ENCODE measurements at regions of chr5 and their contacts with region 1.

Region 1: DNA sequence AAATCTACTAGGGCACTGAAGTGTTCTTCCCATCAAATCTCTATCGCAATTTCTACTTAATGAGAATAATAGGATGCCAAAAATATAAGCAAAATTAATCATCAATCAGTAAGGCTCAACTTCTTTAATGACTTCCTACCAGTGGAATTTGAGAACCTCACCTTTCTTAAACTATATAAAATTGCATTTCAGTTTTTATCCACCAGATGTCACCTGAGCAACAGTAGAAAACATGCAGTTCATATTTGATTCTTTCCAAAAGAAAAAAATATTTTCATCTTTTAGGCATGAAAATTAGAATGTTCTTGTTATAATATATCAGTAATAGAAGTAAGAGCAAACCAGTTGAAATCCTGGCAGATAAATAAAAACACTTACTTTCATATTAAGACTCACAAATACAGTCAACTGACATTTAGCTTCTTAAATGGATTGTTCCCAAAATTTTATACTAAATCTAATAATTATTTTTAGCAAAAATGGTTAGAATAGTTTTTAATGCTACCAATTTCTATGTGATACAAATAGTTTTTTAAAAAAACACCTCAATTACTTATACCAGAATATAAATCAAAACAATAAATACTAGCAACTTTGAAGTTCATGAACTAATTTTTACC is 13.4 kb upstream of the CCDC112 start:
- DNase-seq: no peak
- ATAC-seq: peak; percentile 75
- H3K4me3 ChIP-seq: no peak overlapping the region
- H3K27ac ChIP-seq: no peak overlapping the region
- H3K4me1 ChIP-seq: no peaks in the 10 kb centered on the region
- H3K27me3 ChIP-seq: no peaks in the 10 kb centered on the region
- CTCF ChIP-seq: peak; percentile 25 to 50 (median 47); a peak in 4 of 6 replicates
- EP300 ChIP-seq: no peak
- POLR2A ChIP-seq: no peak
- RAD21 ChIP-seq: peak; percentile 77

Region 2: GRCh38 chr5:115098041-115098702 is 211.7 kb before region 1 on chr5:
- CTCF ChIA-PET with region 1: interaction called, 11 read pairs
- POLR2A ChIA-PET with region 1: no interaction called
- RAD21 ChIA-PET with region 1: interaction called, 24 read pairs
- SMC1A ChIA-PET with region 1: interaction called, 4 read pairs
- in situ Hi-C with region 1: no loop called
- intact Hi-C with region 1: loop called (anchors 5 kb)
- DNase-seq: peak; percentile 7
- ATAC-seq: peak; percentile 97
- H3K4me3 ChIP-seq: no peak overlapping the region
- H3K27ac ChIP-seq: no peak overlapping the region
- H3K4me1 ChIP-seq: no peaks in the 10 kb centered on the region
- H3K27me3 ChIP-seq: no peaks in the 10 kb centered on the region
- CTCF ChIP-seq: peak; percentile 77 to 85 (median 78)
- EP300 ChIP-seq: no peak
- POLR2A ChIP-seq: no peak
- RAD21 ChIP-seq: peak; percentile 81

Region 3: DNA sequence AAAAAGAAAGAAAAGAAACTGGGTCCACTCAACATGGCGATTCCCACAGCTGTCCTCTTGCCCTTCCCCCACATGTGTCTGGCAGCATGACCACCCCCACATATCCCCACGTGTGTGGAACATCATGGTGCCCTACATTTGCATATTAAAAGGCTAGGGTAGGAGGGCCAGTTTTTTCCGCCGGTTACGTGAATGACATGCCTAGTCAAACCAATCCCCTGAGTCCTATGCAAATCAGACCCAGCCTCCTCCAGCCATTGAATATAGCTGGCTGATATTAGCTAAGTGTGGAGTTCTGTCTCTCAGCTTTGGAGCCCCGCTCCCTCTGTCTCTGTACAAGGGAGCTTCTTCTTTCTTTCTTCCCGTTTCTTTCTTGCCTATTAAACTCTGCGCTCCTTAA is 19.6 kb after region 1 on chr5:
- CTCF ChIA-PET with region 1: interaction called, 30 read pairs
- POLR2A ChIA-PET with region 1: no interaction called
- RAD21 ChIA-PET with region 1: interaction called, 10 read pairs
- SMC1A ChIA-PET with region 1: interaction called, 7 read pairs
- in situ Hi-C with region 1: no loop called
- intact Hi-C with region 1: no loop called
- DNase-seq: no peak
- ATAC-seq: no peak
- H3K4me3 ChIP-seq: no peak overlapping the region
- H3K27ac ChIP-seq: no peak overlapping the region
- H3K4me1 ChIP-seq: no peaks in the 10 kb centered on the region
- H3K27me3 ChIP-seq: no peaks in the 10 kb centered on the region
- CTCF ChIP-seq: no peak
- EP300 ChIP-seq: no peak
- POLR2A ChIP-seq: no peak
- RAD21 ChIP-seq: no peak

Region 4: DNA sequence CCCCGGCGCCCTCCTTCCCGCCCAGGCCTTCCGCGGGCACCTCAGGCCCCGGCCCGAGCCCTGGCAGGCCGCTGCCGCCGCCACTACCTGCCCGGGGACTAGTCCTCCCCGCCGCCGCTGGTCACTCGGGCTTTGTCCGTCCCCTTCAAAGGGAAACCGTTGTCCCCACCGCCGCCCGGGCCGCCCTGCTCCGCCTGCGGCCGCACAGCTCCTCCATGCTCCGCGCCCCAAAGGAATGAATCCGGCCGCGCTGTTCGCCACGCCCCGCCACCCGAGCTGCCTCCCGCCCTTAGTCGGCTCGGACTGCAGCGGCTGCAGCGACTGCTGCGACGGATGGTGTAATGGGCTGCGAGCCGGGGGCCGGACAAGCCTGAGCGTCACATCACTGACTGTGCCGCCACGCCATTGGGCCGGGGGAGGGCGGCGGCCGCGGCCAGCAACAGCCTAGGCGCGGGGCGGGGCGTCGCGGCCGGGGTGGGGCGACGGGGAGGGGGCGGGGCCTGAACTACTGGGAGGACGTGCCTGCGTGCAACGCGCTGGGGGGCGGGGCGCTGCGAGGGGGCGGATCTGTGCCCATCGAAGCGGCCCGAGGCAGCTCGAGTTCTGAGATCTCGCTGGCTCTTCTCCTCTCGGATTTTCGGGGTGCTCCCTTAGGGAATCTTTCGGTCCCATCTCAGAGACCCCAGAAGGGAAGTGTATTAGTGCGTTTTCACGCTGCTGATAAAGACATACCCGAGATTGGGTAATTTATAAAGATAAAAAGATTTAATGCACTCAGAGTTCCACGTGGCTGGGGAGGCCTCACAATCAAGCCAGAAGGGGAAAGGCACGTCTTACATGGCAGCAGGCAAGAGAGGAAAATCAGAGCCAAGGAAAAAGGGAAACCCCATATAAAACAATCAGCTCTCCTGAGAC is 234.8 kb after region 1 on chr5 and contains the start of gene FEM1C:
- CTCF ChIA-PET with region 1: interaction called, 33 read pairs
- POLR2A ChIA-PET with region 1: interaction called, 3 read pairs
- RAD21 ChIA-PET with region 1: interaction called, 14 read pairs
- SMC1A ChIA-PET with region 1: interaction called, 54 read pairs
- in situ Hi-C with region 1: no loop called
- intact Hi-C with region 1: no loop called
- DNase-seq: peak; percentile 83
- ATAC-seq: peak; percentile 94
- H3K4me3 ChIP-seq: peak within 1 kb of the TSS; percentile 81
- H3K27ac ChIP-seq: peak within 1 kb of the TSS; percentile 88
- H3K4me1 ChIP-seq: peaks cover 4% of the 10 kb centered on the region
- H3K27me3 ChIP-seq: no peaks in the 10 kb centered on the region
- CTCF ChIP-seq: no peak
- EP300 ChIP-seq: no peak
- POLR2A ChIP-seq: peak; percentile 100
- RAD21 ChIP-seq: no peak
- polyA plus RNA-seq, gene FEM1C: 1.9 to 7.1 TPM

Region 5: DNA sequence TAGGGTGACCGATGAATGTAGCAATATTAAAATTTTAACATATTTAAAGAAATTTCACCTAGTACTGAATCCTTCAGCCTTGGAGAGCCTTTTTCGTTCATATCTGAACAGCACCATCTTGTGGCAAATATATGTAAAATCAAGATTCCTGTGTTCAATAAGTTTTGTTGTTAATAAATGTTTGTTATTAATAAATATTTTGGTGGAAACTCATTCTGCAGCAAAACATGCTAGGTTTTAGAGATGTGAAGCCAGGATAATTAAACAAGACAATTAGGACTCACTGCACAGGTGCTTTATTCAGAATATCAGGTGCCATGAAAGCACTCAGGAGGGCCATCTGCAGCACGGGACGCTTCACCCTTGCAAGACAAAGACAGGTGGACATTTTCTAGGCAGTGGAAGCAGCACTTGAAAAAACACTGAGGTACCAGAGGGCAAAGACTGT is 276.8 kb after region 1 on chr5:
- CTCF ChIA-PET with region 1: interaction called, 85 read pairs
- POLR2A ChIA-PET with region 1: no interaction called
- RAD21 ChIA-PET with region 1: interaction called, 41 read pairs
- SMC1A ChIA-PET with region 1: interaction called, 35 read pairs
- in situ Hi-C with region 1: loop called (anchors 5 kb)
- intact Hi-C with region 1: loop called (anchors 1 kb)
- DNase-seq: no peak
- ATAC-seq: peak; percentile 71
- H3K4me3 ChIP-seq: no peak overlapping the region
- H3K27ac ChIP-seq: no peak overlapping the region
- H3K4me1 ChIP-seq: peaks cover 12% of the 10 kb centered on the region; the same call in 1 of the 2 replicates
- H3K27me3 ChIP-seq: no peaks in the 10 kb centered on the region
- CTCF ChIP-seq: peak; percentile 9 to 60 (median 51); a peak in 5 of 6 replicates
- EP300 ChIP-seq: no peak
- POLR2A ChIP-seq: no peak
- RAD21 ChIP-seq: peak; percentile 81

Region 6: DNA sequence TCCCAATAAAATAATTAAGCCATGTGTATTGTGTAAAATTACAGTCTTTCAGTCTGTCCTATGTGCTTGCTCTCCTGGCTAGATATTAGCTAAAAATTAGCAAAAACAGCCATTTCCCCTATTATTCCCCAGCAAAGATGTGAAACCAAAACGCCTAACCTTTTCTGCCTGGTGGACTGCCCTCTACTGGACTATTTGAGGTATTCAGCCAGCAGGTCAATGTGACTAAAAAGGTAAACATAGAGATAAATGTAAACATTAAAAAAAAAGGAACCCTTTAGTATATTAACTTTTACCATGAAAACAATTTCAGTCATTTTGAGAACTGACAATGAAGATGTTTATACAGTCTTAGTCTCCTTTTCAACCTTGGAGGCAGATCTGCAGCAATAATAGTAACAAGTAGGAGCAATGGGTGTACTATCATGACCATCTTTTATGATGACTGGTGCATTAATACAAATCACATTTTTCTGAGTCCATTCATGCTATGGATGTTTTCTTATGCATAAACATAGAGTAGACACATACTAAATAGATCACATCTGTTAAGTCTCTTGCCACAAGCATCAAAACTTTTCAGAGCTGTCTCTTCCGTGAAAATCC is 521.4 kb after region 1 on chr5:
- CTCF ChIA-PET with region 1: interaction called, 4 read pairs
- POLR2A ChIA-PET with region 1: no interaction called
- RAD21 ChIA-PET with region 1: no interaction called
- SMC1A ChIA-PET with region 1: interaction called, 5 read pairs
- in situ Hi-C with region 1: loop called (anchors 5 kb)
- intact Hi-C with region 1: loop called (anchors 5 kb)
- DNase-seq: no peak
- ATAC-seq: peak; percentile 84
- H3K4me3 ChIP-seq: no peak overlapping the region
- H3K27ac ChIP-seq: no peak overlapping the region
- H3K4me1 ChIP-seq: no peaks in the 10 kb centered on the region
- H3K27me3 ChIP-seq: no peaks in the 10 kb centered on the region
- CTCF ChIP-seq: peak; percentile 65 to 80 (median 72)
- EP300 ChIP-seq: no peak
- POLR2A ChIP-seq: no peak
- RAD21 ChIP-seq: peak; percentile 67